GM12878 (cell line): ENCODE measurements at regions of chr10 and their contacts with region 1.

Region 1: GRCh38 chr10:74213571-74214162 is 62.6 kb downstream of the ADK start:
- DNase-seq: no peak
- ATAC-seq: peak; percentile 73
- H3K4me3 ChIP-seq: no peak overlapping the region
- H3K27ac ChIP-seq: no peak overlapping the region
- H3K4me1 ChIP-seq: no peaks in the 10 kb centered on the region
- H3K27me3 ChIP-seq: no peaks in the 10 kb centered on the region
- CTCF ChIP-seq: peak; percentile 27 to 49 (median 30); a peak in 4 of 6 replicates
- EP300 ChIP-seq: no peak
- POLR2A ChIP-seq: no peak
- RAD21 ChIP-seq: peak; percentile 61

Region 2: GRCh38 chr10:74118804-74119203 is 94.9 kb before region 1 on chr10:
- CTCF ChIA-PET with region 1: interaction called, 23 read pairs
- POLR2A ChIA-PET with region 1: no interaction called
- RAD21 ChIA-PET with region 1: interaction called, 3 read pairs
- SMC1A ChIA-PET with region 1: interaction called, 12 read pairs
- in situ Hi-C with region 1: no loop called
- intact Hi-C with region 1: no loop called
- DNase-seq: no peak
- ATAC-seq: no peak
- H3K4me3 ChIP-seq: no peak overlapping the region
- H3K27ac ChIP-seq: no peak overlapping the region
- H3K4me1 ChIP-seq: peaks cover 10% of the 10 kb centered on the region
- H3K27me3 ChIP-seq: no peaks in the 10 kb centered on the region
- CTCF ChIP-seq: no peak
- EP300 ChIP-seq: no peak
- POLR2A ChIP-seq: no peak
- RAD21 ChIP-seq: no peak

Region 3: DNA sequence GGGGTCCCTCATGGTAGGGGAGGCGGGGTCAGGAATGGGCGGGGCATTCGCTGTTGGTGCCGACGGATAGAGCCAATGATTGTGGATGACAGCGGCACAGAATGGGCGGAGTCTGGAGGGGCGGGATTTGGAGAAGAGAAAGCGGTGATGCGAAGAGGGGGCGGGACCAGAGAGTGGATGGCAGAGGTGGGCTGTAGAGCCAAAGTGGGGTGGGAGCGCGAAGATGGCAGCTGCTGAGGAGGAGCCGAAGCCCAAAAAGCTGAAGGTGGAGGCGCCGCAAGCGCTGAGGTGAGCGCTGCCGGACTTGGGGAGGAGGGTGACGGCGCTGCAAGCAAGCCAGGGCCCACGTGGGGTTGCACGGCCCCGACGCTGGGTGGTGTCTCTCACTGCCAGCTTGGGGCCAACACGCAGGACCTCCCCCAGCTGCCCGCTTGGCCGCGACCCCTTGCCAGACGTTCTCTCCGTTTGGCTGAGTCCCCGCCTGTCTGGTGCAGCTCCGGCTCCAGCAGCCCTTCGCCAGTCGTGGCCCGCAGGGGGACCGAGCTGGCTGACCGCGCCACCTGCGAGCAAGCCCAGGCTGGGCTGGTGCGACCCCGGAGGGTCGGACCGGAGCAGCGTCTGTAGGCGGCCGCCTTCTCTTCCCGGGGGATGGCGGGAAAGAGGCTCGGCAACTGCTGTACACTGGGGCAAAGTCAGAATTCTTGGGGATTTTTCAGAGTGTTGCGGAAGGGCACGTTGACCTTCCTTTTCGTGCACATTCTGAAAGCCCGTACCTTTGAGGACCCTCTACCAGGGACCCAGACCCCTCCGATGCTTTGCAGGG is 62.4 kb before region 1 on chr10 and contains the start of gene ADK:
- CTCF ChIA-PET with region 1: interaction called, 30 read pairs
- POLR2A ChIA-PET with region 1: interaction called, 11 read pairs
- RAD21 ChIA-PET with region 1: interaction called, 14 read pairs
- SMC1A ChIA-PET with region 1: interaction called, 39 read pairs
- in situ Hi-C with region 1: no loop called
- intact Hi-C with region 1: no loop called
- DNase-seq: no peak
- ATAC-seq: peak; percentile 92
- H3K4me3 ChIP-seq: peak within 1 kb of the TSS; percentile 97
- H3K27ac ChIP-seq: peak within 1 kb of the TSS; percentile 99
- H3K4me1 ChIP-seq: peaks cover 11% of the 10 kb centered on the region; the same call in 1 of the 2 replicates
- H3K27me3 ChIP-seq: no peaks in the 10 kb centered on the region
- CTCF ChIP-seq: peak; percentile 20 to 38 (median 29); a peak in 4 of 6 replicates
- EP300 ChIP-seq: no peak
- POLR2A ChIP-seq: peak; percentile 84
- RAD21 ChIP-seq: peak; percentile 21; the same call in 1 of the 2 replicates
- polyA plus RNA-seq, gene ADK: 107 to 117 TPM

Region 4: GRCh38 chr10:74165530-74165901 is 48.2 kb before region 1 on chr10:
- CTCF ChIA-PET with region 1: interaction called, 10 read pairs
- POLR2A ChIA-PET with region 1: no interaction called
- RAD21 ChIA-PET with region 1: interaction called, 17 read pairs
- SMC1A ChIA-PET with region 1: interaction called, 17 read pairs
- in situ Hi-C with region 1: no loop called
- intact Hi-C with region 1: no loop called
- DNase-seq: no peak
- ATAC-seq: peak; percentile 26
- H3K4me3 ChIP-seq: 0 out of 2 replicates have a peak overlapping the region, but pooled peaks have one; percentile 7
- H3K27ac ChIP-seq: peak overlapping the region; percentile 66; the same call in 1 of the 2 replicates
- H3K4me1 ChIP-seq: peaks cover 53% of the 10 kb centered on the region
- H3K27me3 ChIP-seq: no peaks in the 10 kb centered on the region
- CTCF ChIP-seq: no peak
- EP300 ChIP-seq: no peak
- POLR2A ChIP-seq: no peak
- RAD21 ChIP-seq: no peak

Region 5: GRCh38 chr10:74199315-74199714 is 14.4 kb before region 1 on chr10:
- CTCF ChIA-PET with region 1: interaction called, 12 read pairs
- POLR2A ChIA-PET with region 1: no interaction called
- RAD21 ChIA-PET with region 1: interaction called, 3 read pairs
- SMC1A ChIA-PET with region 1: interaction called, 11 read pairs
- in situ Hi-C with region 1: no loop called
- intact Hi-C with region 1: no loop called
- DNase-seq: no peak
- ATAC-seq: no peak
- H3K4me3 ChIP-seq: no peak overlapping the region
- H3K27ac ChIP-seq: no peak overlapping the region
- H3K4me1 ChIP-seq: no peaks in the 10 kb centered on the region; the same call in 1 of the 2 replicates
- H3K27me3 ChIP-seq: no peaks in the 10 kb centered on the region
- CTCF ChIP-seq: no peak
- EP300 ChIP-seq: no peak
- POLR2A ChIP-seq: no peak
- RAD21 ChIP-seq: no peak